ENCODE measurements at regions of chr4 and their contacts with region 1.

Region 1: DNA sequence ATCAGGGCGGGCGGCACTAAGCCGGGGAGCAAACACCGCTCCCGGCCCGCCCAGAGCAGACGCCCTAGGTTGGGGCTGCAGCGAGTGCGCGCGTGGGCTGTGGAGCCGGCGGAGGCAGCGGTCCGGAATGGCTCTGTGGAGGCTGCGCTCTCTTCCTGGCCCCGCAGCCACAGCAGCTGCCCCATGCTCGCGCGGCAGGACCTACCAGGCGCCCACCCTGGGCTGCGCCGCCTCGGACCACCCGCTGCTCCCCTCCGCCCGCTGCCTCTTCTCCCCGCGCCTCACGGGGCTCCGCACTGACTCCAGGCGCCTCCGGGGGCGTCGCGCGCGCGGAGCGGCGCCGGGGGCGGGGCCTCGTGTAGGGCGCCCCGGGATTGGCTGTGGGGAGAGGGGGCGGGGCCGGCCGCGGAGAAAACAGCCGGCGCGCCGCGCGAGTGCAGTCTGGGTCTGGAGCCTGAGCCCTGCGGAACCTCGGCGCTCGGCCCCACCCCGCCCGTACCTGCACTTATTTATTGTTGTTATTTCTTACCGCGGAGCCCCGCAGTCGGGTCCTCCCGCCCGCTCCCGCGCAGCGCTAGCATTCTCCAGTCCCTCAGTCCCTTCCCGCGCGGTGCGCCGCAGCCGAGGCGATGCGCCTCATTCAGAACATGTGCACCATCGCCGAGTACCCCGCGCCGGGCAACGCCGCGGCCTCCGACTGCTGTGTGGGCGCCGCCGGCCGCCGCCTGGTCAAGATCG is at the start of gene RASL11B:
- DNase-seq: peak; percentile 91
- ATAC-seq: peak; percentile 99
- H3K4me3 Mint-ChIP-seq: peak within 1 kb of the TSS; percentile 82
- H3K27ac Mint-ChIP-seq: no peak within 1 kb of the TSS
- H3K4me1 Mint-ChIP-seq: peaks cover 16% of the 10 kb centered on the region
- H3K27me3 Mint-ChIP-seq: peaks cover 38% of the 10 kb centered on the region
- CTCF ChIP-seq: no peak
- total RNA-seq, gene RASL11B: 0.69 TPM in 1 of 2 replicates, not detected in the other

Region 2: DNA sequence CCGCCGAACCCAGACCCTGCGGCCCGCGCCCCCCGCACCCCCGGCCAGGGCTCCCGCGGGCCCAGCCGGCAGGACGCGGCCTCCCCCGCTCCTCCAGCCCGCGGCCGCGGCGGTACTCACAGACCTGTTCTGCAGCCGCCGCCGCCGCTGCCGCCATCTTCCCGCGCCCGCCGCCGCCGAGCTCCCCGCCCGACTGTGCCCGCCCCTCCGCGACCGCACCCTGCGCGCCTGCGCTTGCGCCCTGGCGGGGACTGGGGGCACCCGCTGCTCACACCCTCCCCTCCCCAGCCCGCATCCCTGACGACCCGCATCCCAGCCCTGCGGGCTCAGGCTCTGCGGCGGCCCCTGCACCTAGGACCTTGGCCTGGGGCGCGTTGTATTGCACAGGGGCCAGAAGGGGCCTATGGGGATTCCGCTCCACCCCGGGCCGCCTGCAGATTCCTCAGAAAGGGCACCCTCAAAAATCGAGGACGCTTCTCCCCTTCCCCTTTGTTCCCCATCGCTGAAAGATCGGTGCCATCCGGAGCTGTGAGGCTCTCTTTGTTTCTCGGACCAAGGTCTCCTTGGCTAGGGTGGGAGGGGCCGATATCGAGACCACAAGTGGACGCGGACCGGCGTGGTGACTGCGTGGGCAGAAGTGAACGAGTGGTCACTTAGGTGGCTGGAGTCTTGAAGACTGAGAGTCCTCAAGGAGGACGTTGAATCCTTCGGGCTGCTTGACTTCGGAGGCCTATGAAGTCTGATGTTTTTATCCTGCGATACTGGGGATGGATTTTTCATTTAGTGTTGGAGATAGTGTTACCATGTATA is 823.7 kb before region 1 on chr4 and contains the start of gene SGCB:
- CTCF ChIA-PET with region 1: no interaction called
- POLR2A ChIA-PET with region 1: no interaction called
- intact Hi-C with region 1: loop called (anchors 5 kb)
- DNase-seq: peak; percentile 75
- ATAC-seq: peak; percentile 95
- H3K4me3 Mint-ChIP-seq: peak within 1 kb of the TSS; percentile 85
- H3K27ac Mint-ChIP-seq: peak within 1 kb of the TSS; percentile 64
- H3K4me1 Mint-ChIP-seq: peaks cover 24% of the 10 kb centered on the region
- H3K27me3 Mint-ChIP-seq: peaks cover 25% of the 10 kb centered on the region
- CTCF ChIP-seq: no peak
- total RNA-seq, gene SGCB: 6.5 and 10.8 TPM in 2 replicates

Region 3: GRCh38 chr4:52643785-52644244 is 218.2 kb before region 1 on chr4:
- CTCF ChIA-PET with region 1: no interaction called
- POLR2A ChIA-PET with region 1: interaction called, 3 read pairs
- intact Hi-C with region 1: loop called (anchors 5 kb)
- DNase-seq: no peak
- ATAC-seq: no peak
- H3K4me3 Mint-ChIP-seq: no peak overlapping the region
- H3K27ac Mint-ChIP-seq: no peak overlapping the region
- H3K4me1 Mint-ChIP-seq: peaks cover 45% of the 10 kb centered on the region
- H3K27me3 Mint-ChIP-seq: no peaks in the 10 kb centered on the region
- CTCF ChIP-seq: no peak

Region 4: GRCh38 chr4:52712172-52712990 is 149.7 kb before region 1 on chr4:
- CTCF ChIA-PET with region 1: no interaction called
- POLR2A ChIA-PET with region 1: interaction called, 3 read pairs
- intact Hi-C with region 1: loop called (anchors 1 kb)
- DNase-seq: peak; percentile 92
- ATAC-seq: peak; percentile 94
- H3K4me3 Mint-ChIP-seq: peak overlapping the region; percentile 92
- H3K27ac Mint-ChIP-seq: peak overlapping the region; percentile 95
- H3K4me1 Mint-ChIP-seq: peaks cover 64% of the 10 kb centered on the region
- H3K27me3 Mint-ChIP-seq: no peaks in the 10 kb centered on the region
- CTCF ChIP-seq: no peak

Region 5: DNA sequence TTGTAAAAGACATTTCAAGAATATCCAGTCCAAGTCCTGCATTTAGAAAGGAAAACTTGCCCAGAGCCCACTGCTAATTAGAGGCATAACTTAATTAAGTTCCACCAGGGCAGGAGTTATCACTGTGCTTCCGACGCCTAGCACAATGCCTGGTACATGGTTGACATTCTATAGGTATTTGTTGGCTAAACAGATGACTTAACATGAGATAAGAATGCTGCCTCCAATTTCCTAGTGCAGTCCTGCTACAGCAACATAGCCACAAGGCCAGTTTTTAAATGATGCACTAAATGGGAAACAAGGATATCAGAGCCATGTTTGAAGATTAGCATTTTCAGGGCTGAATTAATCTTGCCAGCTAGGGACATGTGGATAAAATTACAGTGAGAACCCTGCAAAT is 164.2 kb after region 1 on chr4:
- CTCF ChIA-PET with region 1: no interaction called
- POLR2A ChIA-PET with region 1: no interaction called
- intact Hi-C with region 1: no loop called
- DNase-seq: no peak
- ATAC-seq: no peak
- H3K4me3 Mint-ChIP-seq: no peak overlapping the region
- H3K27ac Mint-ChIP-seq: no peak overlapping the region
- H3K4me1 Mint-ChIP-seq: no peaks in the 10 kb centered on the region
- H3K27me3 Mint-ChIP-seq: no peaks in the 10 kb centered on the region
- CTCF ChIP-seq: no peak

Region 6: DNA sequence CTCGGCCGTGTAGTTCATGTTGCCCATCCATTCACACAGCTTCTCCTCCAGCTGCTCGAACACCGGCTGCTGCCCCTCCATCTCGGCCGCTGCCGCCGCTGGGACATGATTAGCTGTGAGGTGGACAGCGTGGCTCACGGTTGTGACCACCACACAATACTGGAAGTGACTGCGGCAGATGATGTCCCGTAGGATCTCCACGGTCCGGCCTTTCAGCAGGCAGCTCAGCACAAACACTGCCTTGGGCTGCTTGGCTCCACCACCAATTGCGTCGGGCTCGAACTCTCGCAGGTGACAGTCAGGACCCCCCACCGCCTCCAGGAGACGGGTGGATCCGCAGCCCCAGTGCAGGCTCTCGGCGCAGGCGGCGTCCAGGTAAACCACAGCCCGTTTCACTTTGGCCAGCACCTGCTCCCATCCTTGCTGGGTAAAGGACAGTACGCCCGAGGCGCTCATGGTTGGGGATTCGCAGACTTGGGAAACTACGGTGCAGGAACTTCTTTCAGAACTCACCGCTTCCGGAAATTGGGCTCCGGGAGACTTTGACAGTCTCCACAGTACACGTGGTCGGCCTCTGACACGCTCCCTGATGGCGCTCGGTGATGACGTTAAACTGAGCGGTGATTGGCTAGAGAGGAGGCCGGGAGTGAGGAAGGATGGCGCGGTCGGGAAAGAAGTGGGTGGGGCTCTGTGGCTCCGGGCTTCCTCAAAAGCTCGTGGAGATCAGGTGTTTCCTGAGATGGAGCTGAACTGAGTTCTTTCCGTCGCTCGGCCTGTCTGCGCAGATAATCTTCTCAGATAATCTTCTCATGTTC is 503.6 kb after region 1 on chr4 and contains the start of gene SCFD2:
- CTCF ChIA-PET with region 1: no interaction called
- POLR2A ChIA-PET with region 1: no interaction called
- intact Hi-C with region 1: loop called (anchors 10 kb)
- DNase-seq: peak; percentile 94
- ATAC-seq: peak; percentile 98
- H3K4me3 Mint-ChIP-seq: peak within 1 kb of the TSS; percentile 95
- H3K27ac Mint-ChIP-seq: peak within 1 kb of the TSS; percentile 93
- H3K4me1 Mint-ChIP-seq: peaks cover 49% of the 10 kb centered on the region
- H3K27me3 Mint-ChIP-seq: peaks cover 12% of the 10 kb centered on the region
- CTCF ChIP-seq: no peak
- total RNA-seq, gene SCFD2: 36.1 and 46.6 TPM in 2 replicates

Measured in activated B cell treated with CpG ODN at 0.5 μM for 24 hours (primary cell).